ENCODE measurements at regions of chr11 and their contacts with region 1.

Region 1: GRCh38 chr11:103055221-103055890 is 36.6 kb downstream of the DCUN1D5 start:
- DNase-seq: peak; percentile 32
- ATAC-seq: peak; percentile 65; the same call in 2 of the 3 replicates
- H3K4me3 ChIP-seq: no peak overlapping the region
- H3K27ac ChIP-seq: no peak overlapping the region
- H3K4me1 ChIP-seq: no peaks in the 10 kb centered on the region
- H3K27me3 ChIP-seq: no peaks in the 10 kb centered on the region
- CTCF ChIP-seq: peak; percentile 57
- EP300 ChIP-seq: no peak
- POLR2A ChIP-seq: no peak
- RAD21 ChIP-seq: no peak

Region 2: DNA sequence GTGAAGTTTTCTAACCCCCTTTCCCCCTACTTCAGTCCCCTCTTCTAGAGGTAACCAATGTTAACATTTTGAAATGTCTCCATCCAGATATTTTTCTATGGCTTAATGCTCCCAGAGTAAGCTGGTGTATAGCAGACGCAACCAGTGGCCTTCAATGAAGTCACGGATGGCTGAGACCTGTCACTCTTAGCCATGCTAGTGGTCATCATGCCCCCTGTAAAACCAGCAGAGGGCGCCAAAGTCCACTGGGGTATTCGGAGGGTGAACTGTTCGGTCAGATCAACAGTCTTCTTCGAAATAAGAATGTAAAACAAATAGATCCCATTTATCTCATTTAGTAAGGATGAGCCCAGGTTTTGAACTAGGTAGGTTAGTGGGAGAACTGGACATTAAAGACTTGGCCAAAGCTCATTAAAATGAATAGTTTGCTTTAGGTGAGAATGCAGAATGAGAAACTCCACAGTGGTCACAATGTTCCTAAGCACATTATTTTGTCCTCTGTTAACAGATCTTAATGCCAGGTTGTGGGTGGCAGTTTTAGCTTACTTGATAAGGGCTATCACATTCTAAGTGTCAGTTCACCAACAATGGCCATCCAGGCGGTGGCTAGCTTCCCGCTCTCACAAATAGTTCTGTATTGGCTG is 322.0 kb before region 1 on chr11:
- CTCF ChIA-PET with region 1: no interaction called
- POLR2A ChIA-PET with region 1: no interaction called
- in situ Hi-C with region 1: no loop called
- intact Hi-C with region 1: loop called (anchors 10 kb)
- DNase-seq: peak; percentile 60
- ATAC-seq: peak; percentile 99
- H3K4me3 ChIP-seq: no peak overlapping the region
- H3K27ac ChIP-seq: no peak overlapping the region
- H3K4me1 ChIP-seq: no peaks in the 10 kb centered on the region
- H3K27me3 ChIP-seq: no peaks in the 10 kb centered on the region
- CTCF ChIP-seq: peak; percentile 81
- EP300 ChIP-seq: no peak
- POLR2A ChIP-seq: no peak
- RAD21 ChIP-seq: peak; percentile 40; the same call in 1 of the 2 replicates

Region 3: GRCh38 chr11:102810945-102811660 is 244.3 kb before region 1 on chr11:
- CTCF ChIA-PET with region 1: no interaction called
- POLR2A ChIA-PET with region 1: no interaction called
- in situ Hi-C with region 1: no loop called
- intact Hi-C with region 1: loop called (anchors 10 kb)
- DNase-seq: peak; percentile 12
- ATAC-seq: peak; percentile 68
- H3K4me3 ChIP-seq: no peak overlapping the region
- H3K27ac ChIP-seq: no peak overlapping the region
- H3K4me1 ChIP-seq: no peaks in the 10 kb centered on the region
- H3K27me3 ChIP-seq: peaks cover 0 to 4% of the 10 kb centered on the region in 2 experiments; a peak in 2 of 5 replicates
- CTCF ChIP-seq: peak; percentile 51
- EP300 ChIP-seq: no peak
- POLR2A ChIP-seq: no peak
- RAD21 ChIP-seq: no peak

Region 4: GRCh38 chr11:103035791-103036434 is 19.4 kb before region 1 on chr11:
- CTCF ChIA-PET with region 1: interaction called, 10 read pairs
- POLR2A ChIA-PET with region 1: no interaction called
- in situ Hi-C with region 1: no loop called
- intact Hi-C with region 1: no loop called
- DNase-seq: peak; percentile 53
- ATAC-seq: peak; percentile 72
- H3K4me3 ChIP-seq: no peak overlapping the region
- H3K27ac ChIP-seq: no peak overlapping the region
- H3K4me1 ChIP-seq: no peaks in the 10 kb centered on the region
- H3K27me3 ChIP-seq: no peaks in the 10 kb centered on the region
- CTCF ChIP-seq: peak; percentile 65
- EP300 ChIP-seq: no peak
- POLR2A ChIP-seq: no peak
- RAD21 ChIP-seq: no peak

Measured in HepG2 (cell line).